Activated naive CD4-positive, alpha-beta T cell treated with anti-CD3 and anti-CD28 coated beads for 36 hours (primary cell): ENCODE measurements at regions of chr11 and their contacts with region 1.

Region 1: GRCh38 chr11:67118801-67119584 is at the start of gene KDM2A:
- DNase-seq: peak; percentile 99
- H3K4me3 Mint-ChIP-seq: peak within 1 kb of the TSS; percentile 97
- H3K27ac Mint-ChIP-seq: peak within 1 kb of the TSS; percentile 92
- H3K4me1 Mint-ChIP-seq: peaks cover 41% of the 10 kb centered on the region
- H3K27me3 Mint-ChIP-seq: no peaks in the 10 kb centered on the region
- total RNA-seq, gene KDM2A: 57.7 to 58.8 TPM

Region 2: GRCh38 chr11:67090717-67091116 is 28.3 kb before region 1 on chr11:
- CTCF ChIA-PET with region 1: no interaction called
- intact Hi-C with region 1: no loop called
- DNase-seq: no peak
- H3K4me3 Mint-ChIP-seq: no peak overlapping the region
- H3K27ac Mint-ChIP-seq: no peak overlapping the region
- H3K4me1 Mint-ChIP-seq: no peaks in the 10 kb centered on the region
- H3K27me3 Mint-ChIP-seq: no peaks in the 10 kb centered on the region

Region 3: DNA sequence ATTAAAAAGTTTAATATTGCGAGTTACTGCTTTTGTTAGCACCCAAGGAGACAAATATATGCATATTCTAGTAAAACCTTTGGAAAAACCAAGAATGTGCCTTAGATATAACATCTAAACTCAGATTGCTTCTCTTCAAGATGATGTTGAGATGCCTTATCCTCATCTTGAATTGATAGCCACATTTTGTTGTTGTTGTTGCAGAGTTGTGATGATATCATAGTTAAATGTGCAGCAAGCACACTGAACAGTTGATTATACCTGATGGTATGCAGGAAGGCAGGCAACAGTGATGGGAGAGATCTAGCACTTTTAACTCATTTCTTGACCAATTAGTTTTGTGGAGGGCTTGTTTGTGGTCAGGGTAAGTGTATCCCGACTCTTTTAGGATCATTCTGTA is 48.1 kb after region 1 on chr11:
- CTCF ChIA-PET with region 1: interaction called, 4 read pairs
- intact Hi-C with region 1: loop called (anchors 5 kb)
- DNase-seq: no peak
- H3K4me3 Mint-ChIP-seq: no peak overlapping the region
- H3K27ac Mint-ChIP-seq: no peak overlapping the region
- H3K4me1 Mint-ChIP-seq: peaks cover 22% of the 10 kb centered on the region
- H3K27me3 Mint-ChIP-seq: no peaks in the 10 kb centered on the region